ENCODE measurements at regions of chr12 and their contacts with region 1.

Region 1: GRCh38 chr12:10771132-10771733 is 31.2 kb downstream of the TAS2R7 start:
- DNase-seq: peak; percentile 27
- H3K4me3 ChIP-seq: no peak overlapping the region
- H3K27ac ChIP-seq: no peak overlapping the region
- H3K4me1 ChIP-seq: no peaks in the 10 kb centered on the region
- CTCF ChIP-seq: peak; percentile 82

Region 2: GRCh38 chr12:11150832-11151231 is 379.6 kb after region 1 on chr12:
- CTCF ChIA-PET with region 1: no interaction called
- POLR2A ChIA-PET with region 1: no interaction called
- intact Hi-C with region 1: no loop called
- DNase-seq: no peak
- H3K4me3 ChIP-seq: no peak overlapping the region
- H3K27ac ChIP-seq: no peak overlapping the region
- H3K4me1 ChIP-seq: no peaks in the 10 kb centered on the region
- CTCF ChIP-seq: no peak

Region 3: DNA sequence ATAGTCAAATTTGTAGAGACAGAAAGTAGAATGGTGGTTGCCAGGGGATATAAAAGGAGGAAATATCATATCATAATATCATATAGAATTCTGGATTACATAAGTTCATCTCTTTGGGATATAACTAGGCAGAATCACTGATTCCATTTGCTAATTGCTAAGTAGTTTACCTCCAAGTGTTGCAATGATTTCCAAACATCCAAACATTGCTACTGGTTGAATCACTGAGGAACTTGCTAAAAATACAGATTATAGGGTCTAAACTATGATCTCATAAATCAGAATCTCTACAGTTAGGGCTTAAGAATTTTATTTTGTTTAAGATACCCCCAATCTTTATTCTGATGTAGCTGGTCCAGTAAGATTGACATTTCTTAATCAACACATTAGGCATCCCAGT is 431.6 kb after region 1 on chr12:
- CTCF ChIA-PET with region 1: no interaction called
- POLR2A ChIA-PET with region 1: interaction called, 4 read pairs
- intact Hi-C with region 1: loop called (anchors 1 kb)
- DNase-seq: no peak
- H3K4me3 ChIP-seq: no peak overlapping the region
- H3K27ac ChIP-seq: no peak overlapping the region
- H3K4me1 ChIP-seq: no peaks in the 10 kb centered on the region
- CTCF ChIP-seq: no peak

Region 4: DNA sequence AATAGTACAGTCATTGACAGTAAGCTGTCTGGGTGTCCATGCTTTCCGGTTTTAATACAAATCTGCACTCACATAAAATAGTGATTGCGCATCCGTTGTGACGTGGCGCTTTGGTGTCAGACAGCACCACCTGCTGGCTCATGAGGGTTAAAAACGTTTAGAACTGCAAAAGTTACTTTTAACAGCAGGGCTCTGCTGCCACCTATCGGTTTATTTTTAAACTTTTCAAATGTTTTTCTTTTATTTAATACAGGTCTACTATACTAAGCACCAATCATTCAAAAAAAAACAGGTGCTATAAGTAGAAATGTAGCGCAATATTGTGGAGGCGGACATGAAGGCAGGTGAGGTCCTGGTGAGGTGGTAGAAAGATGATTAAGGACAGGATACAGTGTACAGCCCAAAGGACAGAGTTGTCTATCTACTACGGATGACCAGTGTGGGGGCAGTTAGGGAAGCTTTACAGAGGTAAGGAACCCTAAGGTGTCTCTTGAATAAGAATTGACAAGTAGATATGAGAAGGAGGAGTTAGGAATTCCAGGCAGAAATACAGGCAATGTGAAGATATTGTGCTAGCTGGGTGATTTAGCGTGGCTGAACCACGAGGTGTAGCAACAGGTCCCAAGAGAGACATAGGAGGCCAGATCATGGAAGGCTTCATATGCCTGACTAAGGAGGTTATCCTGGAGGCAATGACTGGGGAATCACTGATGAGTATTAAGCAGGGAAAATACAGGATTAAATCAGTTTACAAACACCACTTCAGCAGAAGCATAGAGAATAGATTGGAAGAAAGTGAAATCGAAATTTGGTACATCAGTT is 715.6 kb after region 1 on chr12:
- CTCF ChIA-PET with region 1: no interaction called
- POLR2A ChIA-PET with region 1: no interaction called
- intact Hi-C with region 1: loop called (anchors 2 kb)
- DNase-seq: peak; percentile 92
- H3K4me3 ChIP-seq: no peak overlapping the region
- H3K27ac ChIP-seq: no peak overlapping the region
- H3K4me1 ChIP-seq: no peaks in the 10 kb centered on the region
- CTCF ChIP-seq: peak; percentile 100